ENCODE measurements at regions of chrX and their contacts with region 1.

Region 1: DNA sequence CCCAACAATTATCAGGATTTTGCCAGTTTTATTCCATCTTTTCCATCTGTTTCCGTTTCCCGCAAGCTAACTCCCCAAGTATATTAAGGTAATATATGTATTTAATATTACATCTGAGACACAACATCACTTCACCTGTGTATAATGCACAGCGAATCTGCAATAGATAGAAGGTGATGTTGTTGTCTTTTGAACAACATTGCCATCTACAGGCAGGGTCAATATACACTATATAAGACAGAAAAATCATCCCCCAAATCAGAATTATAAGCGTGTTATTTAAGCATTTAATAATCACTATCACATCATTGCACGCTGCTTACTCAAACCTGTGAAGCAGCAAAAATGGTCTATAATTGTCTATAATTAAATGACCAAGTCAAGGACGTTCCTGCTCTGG is 1115.5 kb downstream of the NLGN4X start:
- DNase-seq: no peak
- ATAC-seq: no peak
- H3K4me3 Mint-ChIP-seq: no peak overlapping the region
- H3K27ac Mint-ChIP-seq: no peak overlapping the region
- H3K4me1 Mint-ChIP-seq: no peaks in the 10 kb centered on the region
- H3K27me3 Mint-ChIP-seq: no peaks in the 10 kb centered on the region
- CTCF ChIP-seq: no peak

Region 2: GRCh38 chrX:3962511-3963311 is 1150.4 kb before region 1 on chrX:
- CTCF ChIA-PET with region 1: interaction called, 3 read pairs
- POLR2A ChIA-PET with region 1: no interaction called
- intact Hi-C with region 1: loop called (anchors 5 kb)
- DNase-seq: no peak
- ATAC-seq: no peak
- H3K4me3 Mint-ChIP-seq: no peak overlapping the region
- H3K27ac Mint-ChIP-seq: no peak overlapping the region
- H3K4me1 Mint-ChIP-seq: peaks cover 4% of the 10 kb centered on the region
- H3K27me3 Mint-ChIP-seq: peaks cover 7% of the 10 kb centered on the region
- CTCF ChIP-seq: no peak

Region 3: DNA sequence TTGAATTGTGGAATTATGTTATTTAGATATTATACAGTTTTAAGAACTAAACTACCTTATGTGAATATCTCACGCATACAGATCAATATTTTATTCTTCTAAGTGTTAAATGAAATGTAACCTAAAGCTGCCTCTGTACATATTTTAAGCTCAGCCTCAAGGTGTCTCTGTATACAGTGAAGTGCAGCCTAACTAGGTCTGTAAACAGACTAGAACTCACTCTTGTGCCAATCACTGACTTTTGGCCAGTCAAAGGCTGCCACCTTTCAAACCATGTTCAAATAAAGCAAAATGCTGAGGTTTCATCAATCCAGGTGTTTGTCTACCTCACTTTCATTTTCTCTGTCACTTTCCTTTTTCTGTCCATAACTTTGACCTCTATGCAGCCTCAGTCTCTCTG is 325.1 kb before region 1 on chrX:
- CTCF ChIA-PET with region 1: no interaction called
- POLR2A ChIA-PET with region 1: no interaction called
- intact Hi-C with region 1: loop called (anchors 5 kb)
- DNase-seq: no peak
- ATAC-seq: no peak
- H3K4me3 Mint-ChIP-seq: no peak overlapping the region
- H3K27ac Mint-ChIP-seq: no peak overlapping the region
- H3K4me1 Mint-ChIP-seq: no peaks in the 10 kb centered on the region
- H3K27me3 Mint-ChIP-seq: no peaks in the 10 kb centered on the region
- CTCF ChIP-seq: no peak

Region 4: DNA sequence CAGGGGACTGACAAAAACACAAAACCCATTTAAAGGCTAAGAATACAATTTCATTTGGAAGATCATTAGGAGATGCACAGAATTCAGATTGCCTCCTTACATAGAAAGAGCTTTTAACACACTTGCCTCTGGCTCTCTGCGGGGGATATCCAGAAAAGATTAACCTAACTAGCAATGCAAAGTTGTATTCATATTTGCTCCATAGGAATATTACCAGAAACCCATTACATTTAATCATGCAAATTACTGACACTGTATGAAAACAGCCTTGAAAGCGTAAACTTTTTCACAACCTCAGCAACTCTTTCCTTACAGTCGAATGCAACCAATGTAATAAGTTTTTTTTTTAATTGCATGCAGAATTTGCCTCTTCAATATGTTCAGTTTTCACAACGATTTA is 312.4 kb before region 1 on chrX:
- CTCF ChIA-PET with region 1: no interaction called
- POLR2A ChIA-PET with region 1: no interaction called
- intact Hi-C with region 1: no loop called
- DNase-seq: no peak
- ATAC-seq: no peak
- H3K4me3 Mint-ChIP-seq: no peak overlapping the region
- H3K27ac Mint-ChIP-seq: no peak overlapping the region
- H3K4me1 Mint-ChIP-seq: no peaks in the 10 kb centered on the region
- H3K27me3 Mint-ChIP-seq: no peaks in the 10 kb centered on the region
- CTCF ChIP-seq: no peak